Activated CD4-positive, alpha-beta T cell treated with anti-CD3 and anti-CD28 coated beads for 36 hours (primary cell): ENCODE measurements at regions of chr10 and their contacts with region 1.

Region 1: GRCh38 chr10:133139551-133140065 is 20.4 kb upstream of the KNDC1 start:
- DNase-seq: no peak
- ATAC-seq: no peak
- H3K4me3 Mint-ChIP-seq: no peak overlapping the region
- H3K27ac Mint-ChIP-seq: no peak overlapping the region
- H3K4me1 Mint-ChIP-seq: peaks cover 7% of the 10 kb centered on the region
- H3K27me3 Mint-ChIP-seq: peaks cover 4% of the 10 kb centered on the region

Region 2: DNA sequence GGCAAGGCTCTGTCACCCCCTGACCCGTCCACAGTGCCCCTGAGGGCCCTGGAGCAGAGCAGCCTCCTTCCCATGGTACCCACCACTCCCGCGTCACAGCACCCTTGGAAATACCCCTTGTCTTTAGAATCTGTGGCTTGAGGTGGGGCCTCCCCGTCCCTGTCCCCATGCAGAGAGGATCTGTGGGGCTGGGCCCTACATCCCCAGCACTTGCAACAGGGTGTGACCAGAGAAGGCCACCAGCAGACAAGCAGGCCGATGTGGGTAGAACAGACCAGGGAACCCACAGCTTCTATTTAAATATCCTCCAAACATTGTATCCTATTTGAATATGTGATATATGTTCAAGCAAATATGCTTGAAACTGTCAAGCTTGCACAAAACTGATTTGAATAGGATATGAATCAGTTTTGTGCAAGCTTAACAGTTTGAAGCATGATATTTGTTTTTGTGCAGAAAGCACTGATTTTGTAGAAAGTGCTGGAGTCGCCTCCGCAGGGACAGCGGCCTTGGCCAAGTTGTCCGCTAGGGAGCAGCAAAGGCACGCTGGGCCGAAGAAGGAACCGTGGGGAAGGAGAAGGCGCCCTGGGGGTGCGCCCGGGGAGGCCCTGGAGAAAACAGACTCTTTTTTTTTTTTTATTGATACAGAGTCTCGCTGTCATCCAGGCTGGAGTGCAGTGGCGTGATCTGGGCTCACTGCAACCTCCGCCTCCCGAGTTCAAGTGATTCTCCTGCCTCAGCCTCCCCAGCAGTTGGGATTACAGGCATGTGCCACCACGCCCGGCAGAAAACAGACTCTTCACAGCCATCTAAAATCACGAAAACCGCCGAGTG is 199.4 kb before region 1 on chr10:
- CTCF ChIA-PET with region 1: interaction called, 3 read pairs
- POLR2A ChIA-PET with region 1: no interaction called
- intact Hi-C with region 1: loop called in 1 of 2 experiments (anchors 5 kb)
- DNase-seq: peak; percentile 81
- ATAC-seq: peak; percentile 74
- H3K4me3 Mint-ChIP-seq: no peak overlapping the region
- H3K27ac Mint-ChIP-seq: no peak overlapping the region
- H3K4me1 Mint-ChIP-seq: peaks cover 5% of the 10 kb centered on the region
- H3K27me3 Mint-ChIP-seq: peaks cover 48% of the 10 kb centered on the region

Region 3: GRCh38 chr10:133100706-133101415 is 38.7 kb before region 1 on chr10:
- CTCF ChIA-PET with region 1: no interaction called
- POLR2A ChIA-PET with region 1: interaction called, 10 read pairs
- intact Hi-C with region 1: no loop called
- DNase-seq: peak; percentile 63
- ATAC-seq: peak; percentile 84
- H3K4me3 Mint-ChIP-seq: no peak overlapping the region
- H3K27ac Mint-ChIP-seq: no peak overlapping the region
- H3K4me1 Mint-ChIP-seq: peaks cover 3% of the 10 kb centered on the region
- H3K27me3 Mint-ChIP-seq: peaks cover 11% of the 10 kb centered on the region

Region 4: GRCh38 chr10:133230387-133231195 is 91.0 kb after region 1 on chr10:
- CTCF ChIA-PET with region 1: interaction called, 4 read pairs
- POLR2A ChIA-PET with region 1: no interaction called
- intact Hi-C with region 1: loop called (anchors 2 to 5 kb)
- DNase-seq: peak; percentile 43
- ATAC-seq: no peak
- H3K4me3 Mint-ChIP-seq: no peak overlapping the region
- H3K27ac Mint-ChIP-seq: no peak overlapping the region
- H3K4me1 Mint-ChIP-seq: peaks cover 17% of the 10 kb centered on the region
- H3K27me3 Mint-ChIP-seq: peaks cover 49% of the 10 kb centered on the region